H1 (cell line): ENCODE measurements at regions of chr5 and their contacts with region 1.

Region 1: GRCh38 chr5:126594676-126595485 is at the start of gene ALDH7A1:
- DNase-seq: peak; percentile 88 to 96
- H3K4me3 ChIP-seq: peak within 1 kb of the TSS; percentile 79 to 98 (median 86)
- H3K27ac ChIP-seq: peak within 1 kb of the TSS; percentile 89
- H3K4me1 ChIP-seq: peaks cover 0 to 14% (median 2%) of the 10 kb centered on the region in 4 experiments; a peak in 3 of 7 replicates
- H3K27me3 ChIP-seq: no peaks in the 10 kb centered on the region
- CTCF ChIP-seq: peak; percentile 59 to 71 (median 67)
- EP300 ChIP-seq: peak in 1 of 2 experiments; percentile 49; a peak in 1 of 3 replicates
- POLR2A ChIP-seq: peak; percentile 77 to 94
- RAD21 ChIP-seq: peak; percentile 55 to 70
- total RNA-seq, gene ALDH7A1: 205 and 225 TPM in 2 replicates

Region 2: DNA sequence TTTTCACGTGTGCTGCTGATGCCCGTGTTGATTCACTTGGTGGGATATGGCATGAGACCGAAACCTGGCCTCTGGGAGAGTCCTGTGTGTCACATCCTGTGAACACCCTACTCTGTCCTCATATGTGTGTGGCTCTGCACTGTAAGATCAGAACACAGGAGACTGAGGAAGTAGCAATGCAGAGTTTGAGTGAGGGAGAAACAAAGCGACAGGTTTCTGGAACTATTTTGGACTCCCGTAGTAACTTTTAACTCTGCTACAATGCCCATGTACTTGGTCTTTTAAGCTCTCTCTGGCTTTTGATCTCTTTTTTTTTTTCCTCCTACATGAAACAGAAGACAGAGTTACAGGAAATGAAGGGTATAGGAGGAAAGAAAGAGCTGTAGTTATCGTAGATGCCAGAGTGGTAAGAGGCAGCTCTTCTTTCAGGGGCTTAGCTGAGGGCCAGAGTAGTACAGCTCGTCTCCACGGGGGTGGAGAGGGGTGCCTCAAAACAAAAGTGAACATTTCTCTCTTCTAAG is 145.1 kb before region 1 on chr5:
- CTCF ChIA-PET with region 1: no interaction called
- POLR2A ChIA-PET with region 1: no interaction called
- DNase-seq: no peak
- H3K4me3 ChIP-seq: no peak overlapping the region
- H3K27ac ChIP-seq: no peak overlapping the region
- H3K4me1 ChIP-seq: no peaks in the 10 kb centered on the region
- H3K27me3 ChIP-seq: no peaks in the 10 kb centered on the region
- CTCF ChIP-seq: no peak
- EP300 ChIP-seq: no peak
- POLR2A ChIP-seq: no peak
- RAD21 ChIP-seq: no peak

Region 3: DNA sequence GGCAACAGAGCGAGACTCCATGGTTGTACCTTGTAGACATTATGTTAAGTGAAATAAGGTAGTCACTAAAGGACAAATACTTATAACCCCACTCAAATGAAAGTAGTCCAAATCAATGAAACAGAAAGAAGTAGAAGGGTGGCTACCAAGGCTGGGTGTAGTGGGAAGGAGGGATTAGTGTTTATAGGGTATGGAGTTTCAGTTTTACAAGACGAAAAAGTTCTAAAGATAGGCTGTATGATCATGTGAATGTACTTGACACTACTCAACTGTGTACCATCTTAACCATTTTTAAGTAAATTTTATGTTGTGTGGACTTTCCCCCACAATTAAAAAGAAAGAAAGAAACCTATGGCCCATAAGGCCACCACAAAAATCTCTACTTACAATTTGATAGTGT is 32.1 kb before region 1 on chr5:
- CTCF ChIA-PET with region 1: no interaction called
- POLR2A ChIA-PET with region 1: interaction called, 19 read pairs
- DNase-seq: no peak
- H3K4me3 ChIP-seq: no peak overlapping the region
- H3K27ac ChIP-seq: no peak overlapping the region
- H3K4me1 ChIP-seq: no peaks in the 10 kb centered on the region
- H3K27me3 ChIP-seq: no peaks in the 10 kb centered on the region
- CTCF ChIP-seq: no peak
- EP300 ChIP-seq: no peak
- POLR2A ChIP-seq: no peak
- RAD21 ChIP-seq: no peak

Region 4: DNA sequence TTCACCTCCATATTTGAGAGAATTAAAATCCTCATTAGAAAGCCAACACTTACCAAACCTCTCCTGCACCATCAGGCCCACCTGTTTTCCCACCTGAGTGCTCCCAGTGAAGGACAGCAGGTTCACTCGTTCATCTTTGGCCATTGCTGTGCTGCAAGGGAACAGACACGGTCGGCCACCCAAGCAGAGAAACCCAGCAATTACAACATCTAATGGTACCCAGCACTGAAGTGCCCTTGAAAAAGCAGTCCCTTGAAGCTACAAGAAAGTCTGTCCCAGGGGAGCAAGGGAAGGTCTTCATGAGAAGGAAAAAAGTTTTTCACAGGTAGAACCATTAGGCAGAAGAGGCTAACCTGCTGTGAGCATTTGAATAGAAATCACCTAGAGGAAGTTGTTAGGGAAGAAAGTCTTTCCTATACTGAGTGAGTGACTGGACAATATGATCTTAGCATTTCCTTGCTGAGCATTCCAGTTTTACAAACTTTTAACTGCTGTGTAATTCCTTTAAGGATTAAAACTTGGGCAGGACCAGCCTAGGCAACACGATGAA is 26.6 kb before region 1 on chr5:
- CTCF ChIA-PET with region 1: interaction called, 4 read pairs
- POLR2A ChIA-PET with region 1: interaction called, 19 read pairs
- DNase-seq: no peak
- H3K4me3 ChIP-seq: no peak overlapping the region
- H3K27ac ChIP-seq: no peak overlapping the region; the same call in 1 of the 2 replicates
- H3K4me1 ChIP-seq: peaks cover 0 to 5% (median 2%) of the 10 kb centered on the region in 4 experiments; a peak in 3 of 7 replicates
- H3K27me3 ChIP-seq: no peaks in the 10 kb centered on the region
- CTCF ChIP-seq: no peak
- EP300 ChIP-seq: no peak
- POLR2A ChIP-seq: no peak
- RAD21 ChIP-seq: no peak

Region 5: GRCh38 chr5:126576974-126577373 is 17.9 kb before region 1 on chr5:
- CTCF ChIA-PET with region 1: interaction called, 12 read pairs
- POLR2A ChIA-PET with region 1: interaction called, 12 read pairs
- DNase-seq: no peak
- H3K4me3 ChIP-seq: no peak overlapping the region
- H3K27ac ChIP-seq: no peak overlapping the region
- H3K4me1 ChIP-seq: no peaks in the 10 kb centered on the region
- H3K27me3 ChIP-seq: no peaks in the 10 kb centered on the region
- CTCF ChIP-seq: no peak
- EP300 ChIP-seq: no peak
- POLR2A ChIP-seq: no peak
- RAD21 ChIP-seq: no peak

Region 6: GRCh38 chr5:126610160-126610559 is 15.3 kb after region 1 on chr5:
- CTCF ChIA-PET with region 1: interaction called, 13 read pairs
- POLR2A ChIA-PET with region 1: interaction called, 17 read pairs
- DNase-seq: no peak
- H3K4me3 ChIP-seq: no peak overlapping the region
- H3K27ac ChIP-seq: no peak overlapping the region
- H3K4me1 ChIP-seq: no peaks in the 10 kb centered on the region
- H3K27me3 ChIP-seq: no peaks in the 10 kb centered on the region
- CTCF ChIP-seq: no peak
- EP300 ChIP-seq: no peak
- POLR2A ChIP-seq: no peak
- RAD21 ChIP-seq: no peak